Activated T-helper 2 cell treated with anti-CD3 and anti-CD28 coated beads, Interferon-gamma antibody, Interleukin-2, Interleukin-4, amounts not matched to agents 10 μg/mL and 5 μg/mL and 100 μg/mL, durations not matched to agents 14 hours and 24 hours and 36 hours (primary cell): ENCODE measurements at regions of chrX and their contacts with region 1.

Region 1: GRCh38 chrX:129637217-129638109 is 17.3 kb downstream of the APLN start:
- DNase-seq: peak; percentile 54
- H3K4me3 Mint-ChIP-seq: no peak overlapping the region
- H3K27ac Mint-ChIP-seq: no peak overlapping the region
- H3K4me1 Mint-ChIP-seq: peaks cover 6% of the 10 kb centered on the region
- H3K27me3 Mint-ChIP-seq: peaks cover 3% of the 10 kb centered on the region

Region 2: DNA sequence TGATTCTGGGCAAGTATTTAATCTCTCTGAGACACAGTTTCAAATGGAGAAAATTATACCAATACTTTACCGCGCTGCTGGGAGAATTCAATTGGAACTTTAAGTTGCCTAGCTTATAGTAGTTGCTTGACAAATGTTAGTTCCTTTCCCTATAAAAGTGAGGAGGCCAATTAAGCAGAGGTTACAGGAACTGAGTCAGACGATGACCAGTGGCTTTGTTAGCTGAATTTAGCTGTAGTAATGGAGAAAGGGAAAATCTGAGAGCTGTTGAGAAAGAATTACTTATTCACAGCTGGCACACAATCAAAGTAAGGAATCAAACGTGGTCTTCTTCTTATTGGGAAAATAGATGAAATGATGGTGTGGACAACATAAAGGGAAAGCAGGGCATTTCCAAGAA is 143.8 kb before region 1 on chrX:
- intact Hi-C with region 1: no loop called
- DNase-seq: no peak
- H3K4me3 Mint-ChIP-seq: no peak overlapping the region
- H3K27ac Mint-ChIP-seq: no peak overlapping the region
- H3K4me1 Mint-ChIP-seq: no peaks in the 10 kb centered on the region
- H3K27me3 Mint-ChIP-seq: peaks cover 2% of the 10 kb centered on the region

Region 3: DNA sequence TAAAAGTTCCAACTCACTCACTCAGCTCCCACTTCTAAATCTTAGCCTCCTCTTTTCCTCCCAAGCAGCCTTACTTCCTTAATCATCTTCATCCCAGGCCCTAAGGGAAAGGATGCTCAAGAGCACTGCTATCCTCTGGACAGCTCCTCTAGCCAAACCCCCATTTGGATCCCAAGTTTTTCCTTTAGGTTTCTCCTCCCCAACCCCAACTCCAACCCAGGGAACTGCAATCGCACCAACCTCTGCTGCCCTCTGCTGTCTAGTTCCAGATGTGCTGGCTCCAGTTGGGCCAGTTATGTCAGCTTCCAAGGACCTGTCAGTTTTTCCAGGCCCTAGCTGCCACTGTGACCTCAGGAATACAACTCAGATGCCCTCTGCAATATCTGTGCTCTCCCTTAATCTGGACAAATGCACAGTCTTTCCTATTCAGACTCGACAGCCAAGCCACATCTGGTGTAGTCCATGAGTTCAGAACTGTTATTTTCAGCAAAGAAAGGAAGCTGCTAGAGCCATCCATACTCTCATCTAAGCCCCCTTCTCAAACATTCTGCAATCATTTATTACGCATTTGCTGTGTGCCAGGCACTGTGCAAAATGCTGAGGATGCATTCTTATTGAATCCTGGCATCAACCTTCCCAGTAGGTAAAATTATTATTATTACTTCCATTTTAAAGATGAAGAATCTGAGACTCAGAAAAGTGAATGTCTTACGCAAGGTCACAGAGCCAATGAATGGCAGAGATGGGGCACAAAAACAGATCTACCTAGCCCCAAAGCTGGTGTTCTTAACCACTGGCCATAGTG is 89.0 kb after region 1 on chrX:
- intact Hi-C with region 1: loop called (anchors 2 kb)
- DNase-seq: no peak
- H3K4me3 Mint-ChIP-seq: no peak overlapping the region
- H3K27ac Mint-ChIP-seq: no peak overlapping the region
- H3K4me1 Mint-ChIP-seq: peaks cover 31% of the 10 kb centered on the region
- H3K27me3 Mint-ChIP-seq: peaks cover 7% of the 10 kb centered on the region

Region 4: DNA sequence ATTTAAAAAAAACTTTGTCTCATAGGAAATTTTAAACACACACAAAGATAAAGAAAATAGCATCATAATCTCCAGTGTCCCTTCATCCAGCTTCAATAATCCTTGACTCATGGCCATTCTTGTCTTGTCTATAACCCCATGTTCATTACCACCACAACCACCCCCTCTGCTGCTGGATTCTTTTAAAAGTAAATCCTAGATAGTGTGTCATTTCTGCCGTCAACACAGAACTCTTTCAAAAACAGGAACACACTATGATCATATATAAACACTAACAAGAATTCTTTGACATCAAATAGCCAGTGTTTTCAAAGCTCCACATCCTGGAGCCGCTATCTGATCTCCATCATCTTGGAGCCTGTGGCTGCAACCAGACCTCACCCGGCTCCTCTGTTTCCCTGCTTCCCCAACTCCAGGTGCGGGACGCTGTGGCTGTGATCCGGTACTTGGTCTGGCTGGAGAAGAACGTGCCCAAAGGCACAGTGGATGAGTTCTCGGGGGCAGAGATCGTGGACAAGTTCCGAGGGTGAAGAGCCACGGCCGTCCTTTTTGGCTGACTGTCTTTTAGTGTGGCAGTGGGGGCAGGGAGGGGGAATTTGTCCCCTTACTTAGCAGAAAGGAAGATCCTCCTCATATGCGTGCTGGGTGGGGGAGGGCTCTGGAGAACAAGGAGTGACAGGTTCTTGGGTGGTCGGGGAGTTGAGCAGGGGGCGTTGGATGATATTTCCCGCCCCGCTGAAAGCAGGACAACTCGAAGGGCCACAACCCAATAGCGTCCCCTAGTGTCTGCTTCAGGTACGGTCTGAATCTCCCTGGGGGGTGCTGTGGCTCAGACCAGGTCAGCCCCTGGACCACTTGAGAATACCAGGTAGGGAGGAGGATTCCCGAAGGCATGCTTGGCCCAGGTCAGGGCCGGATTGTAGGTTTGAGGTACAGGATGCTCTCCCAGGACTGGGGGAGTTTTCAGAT is 116.9 kb after region 1 on chrX:
- intact Hi-C with region 1: loop called (anchors 5 kb)
- DNase-seq: no peak
- H3K4me3 Mint-ChIP-seq: no peak overlapping the region
- H3K27ac Mint-ChIP-seq: peak overlapping the region; percentile 28
- H3K4me1 Mint-ChIP-seq: peaks cover 36% of the 10 kb centered on the region
- H3K27me3 Mint-ChIP-seq: no peaks in the 10 kb centered on the region

Region 5: GRCh38 chrX:129823115-129823514 is 185.7 kb after region 1 on chrX:
- intact Hi-C with region 1: loop called (anchors 1 kb)
- DNase-seq: no peak
- H3K4me3 Mint-ChIP-seq: no peak overlapping the region
- H3K27ac Mint-ChIP-seq: peak overlapping the region; percentile 81
- H3K4me1 Mint-ChIP-seq: peaks cover 14% of the 10 kb centered on the region
- H3K27me3 Mint-ChIP-seq: no peaks in the 10 kb centered on the region